H1 (cell line): ENCODE measurements at regions of chr2 and their contacts with region 1.

Region 1: GRCh38 chr2:27016801-27017325 is 15.9 kb upstream of the TMEM214 start:
- DNase-seq: peak; percentile 61 to 85
- H3K4me3 ChIP-seq: no peak overlapping the region
- H3K27ac ChIP-seq: no peak overlapping the region
- H3K4me1 ChIP-seq: peaks cover 3 to 6% (median 5%) of the 10 kb centered on the region in 4 experiments; a peak in 6 of 7 replicates
- H3K27me3 ChIP-seq: no peaks in the 10 kb centered on the region; a peak in 2 of 7 replicates
- CTCF ChIP-seq: peak in 2 of 3 experiments; percentile 80 to 83; a peak in 3 of 4 replicates
- EP300 ChIP-seq: peak in 1 of 2 experiments; percentile 39; a peak in 1 of 3 replicates
- POLR2A ChIP-seq: no peak
- RAD21 ChIP-seq: peak; percentile 91 to 92

Region 2: GRCh38 chr2:26840937-26841613 is 175.8 kb before region 1 on chr2:
- CTCF ChIA-PET with region 1: interaction called, 94 read pairs
- POLR2A ChIA-PET with region 1: interaction called, 3 read pairs
- DNase-seq: no peak
- H3K4me3 ChIP-seq: no peak overlapping the region
- H3K27ac ChIP-seq: no peak overlapping the region
- H3K4me1 ChIP-seq: peaks cover 0 to 2% (median 0%) of the 10 kb centered on the region in 4 experiments; a peak in 2 of 7 replicates
- H3K27me3 ChIP-seq: peaks cover 0 to 12% (median 5%) of the 10 kb centered on the region in 4 experiments; a peak in 4 of 7 replicates
- CTCF ChIP-seq: peak in 2 of 3 experiments; percentile 5 to 11; a peak in 1 of 4 replicates
- EP300 ChIP-seq: no peak
- POLR2A ChIP-seq: no peak
- RAD21 ChIP-seq: 0 out of 4 replicates have a peak, but pooled peaks of 1 of the 2 experiments have one; percentile 16

Region 3: GRCh38 chr2:26942543-26943295 is 74.1 kb before region 1 on chr2:
- CTCF ChIA-PET with region 1: interaction called, 63 read pairs
- POLR2A ChIA-PET with region 1: no interaction called
- DNase-seq: peak; percentile 69 to 91
- H3K4me3 ChIP-seq: peak overlapping the region; percentile 37 to 59 (median 40); a peak in 7 of 8 replicates
- H3K27ac ChIP-seq: no peak overlapping the region
- H3K4me1 ChIP-seq: peaks cover 2 to 23% (median 7%) of the 10 kb centered on the region in 4 experiments
- H3K27me3 ChIP-seq: peaks cover 0 to 3% (median 0%) of the 10 kb centered on the region in 4 experiments; a peak in 1 of 7 replicates
- CTCF ChIP-seq: peak; percentile 85 to 90 (median 85)
- EP300 ChIP-seq: no peak
- POLR2A ChIP-seq: no peak
- RAD21 ChIP-seq: peak; percentile 82 to 89

Region 4: DNA sequence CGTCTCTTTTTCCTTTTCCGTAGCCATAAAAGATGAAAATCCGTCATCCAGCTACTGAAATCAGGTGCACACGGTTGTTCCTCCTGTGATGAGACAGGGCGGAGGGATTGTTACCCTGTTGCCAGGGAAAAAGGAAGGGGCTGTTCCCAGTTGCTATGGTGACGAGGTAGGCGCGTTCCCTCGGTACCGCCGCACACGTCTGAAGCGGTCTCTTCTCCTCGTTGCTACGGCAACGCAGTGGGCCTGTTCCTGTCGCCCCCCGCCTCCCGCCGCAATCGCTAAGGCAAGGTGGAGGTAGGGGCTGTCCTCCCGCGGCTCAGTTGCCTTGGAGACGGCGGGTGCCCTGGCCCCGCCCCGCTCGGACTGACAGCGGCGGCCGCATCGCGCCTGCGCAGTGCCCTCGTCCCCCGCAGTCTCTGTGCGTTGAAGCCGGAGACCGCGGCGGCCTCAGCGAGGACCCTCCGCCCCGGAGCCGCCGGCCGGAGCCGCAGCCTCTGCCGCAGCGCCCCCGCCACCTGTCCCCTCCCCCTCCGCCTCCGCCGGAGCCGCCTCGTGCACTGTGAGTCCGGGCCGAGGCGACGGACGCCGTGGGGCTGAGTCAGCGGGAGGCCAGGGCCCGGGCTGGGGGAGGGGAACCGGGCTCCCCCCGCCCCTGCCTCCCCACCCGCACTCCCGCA is 46.5 kb before region 1 on chr2 and contains the start of gene MAPRE3:
- CTCF ChIA-PET with region 1: interaction called, 416 read pairs
- POLR2A ChIA-PET with region 1: interaction called, 9 read pairs
- DNase-seq: peak; percentile 90 to 97
- H3K4me3 ChIP-seq: peak within 1 kb of the TSS; percentile 63 to 95 (median 90)
- H3K27ac ChIP-seq: no peak within 1 kb of the TSS
- H3K4me1 ChIP-seq: peaks cover 0 to 6% (median 4%) of the 10 kb centered on the region in 4 experiments; a peak in 5 of 7 replicates
- H3K27me3 ChIP-seq: peaks cover 0 to 16% (median 3%) of the 10 kb centered on the region in 4 experiments; a peak in 4 of 7 replicates
- CTCF ChIP-seq: no peak
- EP300 ChIP-seq: no peak
- POLR2A ChIP-seq: no peak
- RAD21 ChIP-seq: no peak
- total RNA-seq, gene MAPRE3: 6.6 and 7.5 TPM in 2 replicates

Region 5: DNA sequence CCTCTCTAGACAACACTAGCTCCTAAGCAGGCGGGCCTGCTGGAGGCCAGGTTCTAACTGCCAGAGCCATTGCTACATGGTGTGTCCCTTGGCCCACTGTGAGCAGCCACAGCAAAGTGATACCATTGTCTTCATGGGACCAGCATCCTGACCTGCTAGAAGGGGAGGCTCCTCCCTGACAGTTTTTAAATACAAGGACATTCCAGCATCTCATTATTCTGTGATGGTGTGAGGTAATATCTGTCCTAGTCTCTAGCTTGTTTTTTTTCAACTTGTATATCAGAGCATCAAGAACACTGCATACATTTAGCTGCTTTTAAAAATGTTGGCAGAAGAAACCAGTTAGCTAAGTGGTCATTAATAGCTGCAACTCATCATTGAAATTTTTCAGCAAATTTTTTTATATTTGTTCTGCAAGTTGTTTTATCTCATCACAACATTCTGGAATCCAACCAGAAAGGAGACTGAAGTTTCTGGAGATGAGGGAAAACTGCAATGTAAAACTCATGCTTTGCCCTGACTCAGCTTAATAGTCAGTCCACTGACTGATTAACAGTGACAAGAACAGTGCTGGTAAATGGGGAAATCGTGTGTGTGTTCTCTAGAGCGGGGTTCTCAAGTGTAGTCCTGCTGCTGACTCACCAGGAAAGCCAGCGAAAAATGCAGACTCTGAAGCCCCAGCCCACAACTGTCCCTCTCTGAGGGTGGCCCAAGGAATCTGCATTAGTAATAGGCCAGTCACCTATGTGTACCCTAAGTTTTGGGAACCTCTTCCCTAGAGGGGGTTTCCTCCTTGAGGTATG is 28.6 kb before region 1 on chr2:
- CTCF ChIA-PET with region 1: interaction called, 34 read pairs
- POLR2A ChIA-PET with region 1: no interaction called
- DNase-seq: no peak
- H3K4me3 ChIP-seq: no peak overlapping the region
- H3K27ac ChIP-seq: no peak overlapping the region
- H3K4me1 ChIP-seq: no peaks in the 10 kb centered on the region
- H3K27me3 ChIP-seq: no peaks in the 10 kb centered on the region
- CTCF ChIP-seq: no peak
- EP300 ChIP-seq: no peak
- POLR2A ChIP-seq: no peak
- RAD21 ChIP-seq: no peak

Region 6: DNA sequence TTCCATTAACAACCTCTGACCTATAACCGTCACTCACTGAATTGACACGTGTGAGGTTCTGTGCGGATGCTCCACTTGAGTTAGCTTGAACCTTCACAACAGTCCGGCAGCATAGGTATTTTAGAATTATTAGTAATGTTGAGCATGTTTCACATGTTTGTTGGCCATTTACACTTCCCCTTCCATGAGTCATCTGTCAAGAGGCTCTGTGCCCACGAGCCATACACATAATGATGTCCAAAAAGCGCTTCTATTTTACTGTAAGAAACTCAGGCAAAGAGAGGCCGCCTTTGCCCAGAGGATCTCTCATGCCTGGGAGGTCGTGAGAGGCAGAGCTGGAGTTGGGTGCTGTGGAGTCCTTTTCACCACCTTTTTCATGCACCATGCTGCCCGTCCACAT is 13.0 kb before region 1 on chr2:
- CTCF ChIA-PET with region 1: interaction called, 19 read pairs
- POLR2A ChIA-PET with region 1: no interaction called
- DNase-seq: no peak
- H3K4me3 ChIP-seq: no peak overlapping the region
- H3K27ac ChIP-seq: no peak overlapping the region
- H3K4me1 ChIP-seq: 0 out of 7 replicates have a peak, but pooled peaks cover 0 to 2% (median 0%) of the 10 kb centered on the region in 4 experiments
- H3K27me3 ChIP-seq: no peaks in the 10 kb centered on the region; a peak in 2 of 7 replicates
- CTCF ChIP-seq: no peak
- EP300 ChIP-seq: no peak
- POLR2A ChIP-seq: no peak
- RAD21 ChIP-seq: no peak